Sigmoid colon (tissue), 7 donors: ENCODE measurements at regions of chr2 and their contacts with region 1.

Region 1: DNA sequence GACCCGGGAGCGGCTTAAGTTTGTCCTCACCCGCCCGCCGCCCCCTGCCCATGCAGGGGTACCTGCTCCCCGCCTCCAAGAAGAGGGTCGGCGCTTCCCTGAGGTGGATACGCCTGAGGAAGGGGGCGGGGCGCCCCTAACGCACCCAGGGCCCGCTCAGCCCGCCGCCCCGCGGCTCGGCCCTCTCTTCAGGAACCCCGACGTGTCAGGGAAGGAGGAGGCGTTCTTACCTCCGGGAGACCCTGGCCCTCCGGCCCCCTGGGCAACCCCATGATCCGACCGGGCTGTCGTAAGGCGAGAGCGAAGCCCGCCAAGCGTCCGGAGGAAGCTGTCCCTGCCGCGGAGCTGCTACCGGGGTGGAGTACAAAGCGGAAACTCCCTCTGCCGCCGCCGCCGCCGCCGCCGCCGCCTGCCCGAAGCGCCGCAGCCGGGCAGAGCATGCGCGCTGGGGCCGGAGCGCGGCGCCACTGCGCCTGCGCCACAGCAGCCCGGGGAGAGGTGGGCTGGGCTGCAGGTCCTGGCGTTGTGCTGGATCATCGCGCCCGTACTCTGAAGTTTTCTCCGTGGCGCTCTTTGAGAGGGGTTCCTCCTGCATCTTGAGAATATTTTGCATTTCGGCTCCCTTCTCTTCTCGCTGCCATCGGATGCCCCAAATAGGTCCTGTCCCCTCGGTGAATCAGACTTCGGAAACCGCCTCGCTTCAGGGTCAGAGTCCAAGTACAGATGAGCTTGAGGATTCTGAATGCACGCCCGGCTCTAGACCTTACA is at the start of gene CCDC93:
- DNase-seq: peak; percentile 86
- H3K4me3 ChIP-seq: peak within 1 kb of the TSS; percentile 72 to 100 (median 95)
- H3K27ac ChIP-seq: peak within 1 kb of the TSS; percentile 87 to 92 (median 89)
- H3K4me1 ChIP-seq: peaks cover 0 to 28% (median 17%) of the 10 kb centered on the region in 4 donors
- H3K27me3 ChIP-seq: no peaks in the 10 kb centered on the region
- CTCF ChIP-seq: no peak
- EP300 ChIP-seq: no peak
- POLR2A ChIP-seq: peak; percentile 39 to 49
- total RNA-seq, gene CCDC93: 12.5 to 25.5 (median 15.3) TPM

Region 2: GRCh38 chr2:117856415-117857210 is 157.3 kb before region 1 on chr2:
- intact Hi-C with region 1: no loop called
- DNase-seq: no peak
- H3K4me3 ChIP-seq: no peak overlapping the region
- H3K27ac ChIP-seq: no peak overlapping the region
- H3K4me1 ChIP-seq: peaks cover 0 to 6% (median 0%) of the 10 kb centered on the region in 4 donors
- H3K27me3 ChIP-seq: peaks cover 0 to 31% (median 17%) of the 10 kb centered on the region in 3 donors
- CTCF ChIP-seq: no peak
- EP300 ChIP-seq: no peak
- POLR2A ChIP-seq: no peak

Region 3: GRCh38 chr2:118088051-118089024 is 74.4 kb after region 1 on chr2 and contains the start of gene INSIG2:
- intact Hi-C with region 1: loop called (anchors 5 kb)
- DNase-seq: peak; percentile 94
- H3K4me3 ChIP-seq: peak within 1 kb of the TSS; percentile 59 to 90 (median 70)
- H3K27ac ChIP-seq: peak within 1 kb of the TSS; percentile 60 to 76 (median 65)
- H3K4me1 ChIP-seq: peaks cover 0 to 25% (median 18%) of the 10 kb centered on the region in 4 donors
- H3K27me3 ChIP-seq: no peaks in the 10 kb centered on the region
- CTCF ChIP-seq: peak in 1 of 4 experiments; percentile 13
- EP300 ChIP-seq: no peak
- POLR2A ChIP-seq: peak; percentile 37 to 68
- total RNA-seq, gene INSIG2: 15.2 to 20.7 (median 18.6) TPM